Dorsolateral prefrontal cortex (tissue), 120 donors: ENCODE measurements at regions of chr10 and their contacts with region 1.

Region 1: DNA sequence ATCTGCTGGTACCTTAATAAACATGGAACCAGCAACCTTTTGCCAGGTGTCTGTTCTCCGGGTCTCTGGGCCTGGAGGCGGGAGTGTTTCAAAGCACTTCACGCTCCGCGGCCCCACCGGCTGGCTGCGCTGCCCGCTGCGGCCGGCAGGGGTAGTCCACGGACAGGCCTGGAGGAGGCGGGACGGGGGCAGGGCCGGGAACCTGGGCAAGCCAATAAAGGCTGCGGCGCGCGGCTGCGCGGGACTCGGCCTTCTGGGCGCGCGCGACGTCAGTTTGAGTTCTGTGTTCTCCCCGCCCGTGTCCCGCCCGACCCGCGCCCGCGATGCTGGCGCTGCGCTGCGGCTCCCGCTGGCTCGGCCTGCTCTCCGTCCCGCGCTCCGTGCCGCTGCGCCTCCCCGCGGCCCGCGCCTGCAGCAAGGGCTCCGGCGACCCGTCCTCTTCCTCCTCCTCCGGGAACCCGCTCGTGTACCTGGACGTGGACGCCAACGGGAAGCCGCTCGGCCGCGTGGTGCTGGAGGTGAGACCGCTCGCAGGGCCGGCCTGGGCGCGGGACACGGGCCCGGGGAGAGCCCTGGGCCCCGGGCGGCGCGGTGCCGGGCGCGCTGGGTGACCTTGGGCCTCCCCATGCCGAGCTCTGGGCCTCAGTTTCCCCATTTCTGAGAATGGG is at the start of gene PPIF:
- DNase-seq: peak; percentile 95 to 97 (median 96)
- H3K4me3 ChIP-seq: peak within 1 kb of the TSS; percentile 66 to 99 (median 88)
- H3K27ac ChIP-seq: peak within 1 kb of the TSS in 58 of 59 donors; percentile 43 to 95 (median 86)
- H3K27me3 ChIP-seq: no peaks in the 10 kb centered on the region
- CTCF ChIP-seq: peak; percentile 85 to 100 (median 98)
- total RNA-seq, gene PPIF: 36.9 to 90.0 (median 52.6) TPM

Region 2: DNA sequence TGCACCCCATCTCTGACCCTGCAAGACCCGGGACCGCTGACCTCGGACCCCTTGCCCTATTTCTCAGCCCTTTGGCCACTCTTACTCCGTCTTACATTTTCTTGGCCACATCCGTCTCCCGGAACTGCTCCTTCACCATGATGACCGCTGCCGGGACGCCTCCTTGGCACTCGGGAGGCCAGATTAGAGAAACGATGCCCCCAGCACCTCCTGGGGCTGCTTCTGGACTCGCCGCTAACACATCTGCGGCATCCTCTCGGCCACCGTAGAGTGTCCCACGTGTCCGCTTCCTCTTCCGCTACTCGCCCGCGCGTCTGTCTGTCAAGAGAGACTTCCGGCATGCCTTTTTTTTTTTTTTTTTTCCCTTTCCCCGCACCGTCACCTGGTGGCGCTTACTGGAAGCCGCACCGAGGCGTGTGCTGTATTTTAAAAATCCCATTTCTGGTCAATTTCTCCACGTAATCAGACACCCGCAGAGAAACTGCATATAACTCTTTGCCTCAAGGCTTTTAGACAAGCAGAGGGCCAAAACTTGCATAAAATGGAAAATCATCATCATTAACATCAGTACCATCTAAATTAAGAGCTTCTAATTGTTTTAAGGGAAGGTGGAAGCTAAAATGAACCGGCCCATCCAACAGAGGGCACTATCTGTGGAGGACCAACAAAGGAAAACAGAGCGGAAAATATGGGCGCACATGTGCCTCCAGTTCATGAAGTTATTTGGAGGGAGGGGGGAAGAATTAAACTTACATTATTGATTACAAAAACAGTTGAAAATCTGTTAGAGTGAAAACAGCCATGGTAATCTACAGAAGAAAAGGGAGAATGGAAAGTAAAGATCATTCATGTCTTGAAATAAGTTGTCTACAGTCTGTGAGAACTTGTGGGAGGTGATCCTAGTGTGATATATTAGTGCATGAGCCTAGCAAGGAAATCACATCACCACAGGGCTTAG is 1317.8 kb before region 1 on chr10 and contains the start of gene POLR3A:
- intact Hi-C with region 1: loop called in 1 of 2 experiments (anchors 10 kb)
- DNase-seq: peak; percentile 85 to 93 (median 90)
- H3K4me3 ChIP-seq: peak within 1 kb of the TSS; percentile 61 to 100 (median 94)
- H3K27ac ChIP-seq: peak within 1 kb of the TSS; percentile 74 to 98 (median 91)
- H3K27me3 ChIP-seq: no peaks in the 10 kb centered on the region
- CTCF ChIP-seq: peak; percentile 45 to 91 (median 77)
- total RNA-seq, gene POLR3A: 23.2 to 48.6 (median 36.6) TPM

Region 3: GRCh38 chr10:79221110-79222051 is 126.0 kb before region 1 on chr10:
- intact Hi-C with region 1: loop called in 1 of 2 experiments (anchors 5 kb)
- DNase-seq: peak; percentile 57 to 84 (median 76)
- H3K4me3 ChIP-seq: peak overlapping the region in 24 of 59 donors; percentile 3 to 44 (median 22)
- H3K27ac ChIP-seq: peak overlapping the region; percentile 1 to 91 (median 83)
- H3K27me3 ChIP-seq: no peaks in the 10 kb centered on the region
- CTCF ChIP-seq: peak in 32 of 56 donors; percentile 7 to 51 (median 32)

Region 4: DNA sequence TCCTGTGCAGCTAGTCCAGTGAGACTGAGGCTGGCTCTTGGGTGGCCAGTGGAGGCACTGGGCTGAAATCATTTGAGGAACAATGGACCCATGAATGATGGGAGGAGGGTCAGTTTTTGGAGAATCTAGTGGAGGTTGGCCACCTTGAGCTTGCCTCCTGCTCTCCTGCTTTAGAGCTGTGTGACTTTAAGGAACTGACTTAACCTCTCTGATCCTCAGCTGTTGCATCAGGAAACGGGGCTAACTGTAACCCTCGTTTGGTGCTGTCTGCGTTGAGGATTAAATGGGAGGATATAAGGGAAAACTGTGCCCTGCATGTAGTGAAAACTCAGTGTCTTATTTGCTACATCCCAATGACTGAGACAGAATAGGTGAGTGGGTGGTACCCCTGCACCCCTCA is 115.5 kb before region 1 on chr10:
- intact Hi-C with region 1: no loop called
- DNase-seq: no peak
- H3K4me3 ChIP-seq: no peak overlapping the region
- H3K27ac ChIP-seq: no peak overlapping the region
- H3K27me3 ChIP-seq: no peaks in the 10 kb centered on the region
- CTCF ChIP-seq: no peak

Region 5: GRCh38 chr10:79242620-79243152 is 104.7 kb before region 1 on chr10:
- intact Hi-C with region 1: loop called in 1 of 2 experiments (anchors 2 kb)
- DNase-seq: peak in 7 of 10 donors; percentile 42 to 86 (median 71)
- H3K4me3 ChIP-seq: peak overlapping the region; percentile 48 to 80 (median 64)
- H3K27ac ChIP-seq: peak overlapping the region in 57 of 59 donors; percentile 48 to 97 (median 90)
- H3K27me3 ChIP-seq: no peaks in the 10 kb centered on the region
- CTCF ChIP-seq: peak in 1 of 56 donors; percentile 32

Region 6: GRCh38 chr10:79274279-79275104 is 72.9 kb before region 1 on chr10:
- intact Hi-C with region 1: loop called in 1 of 2 experiments (anchors 2 kb)
- DNase-seq: peak; percentile 71 to 97 (median 95)
- H3K4me3 ChIP-seq: peak overlapping the region in 31 of 59 donors; percentile 3 to 44 (median 24)
- H3K27ac ChIP-seq: peak overlapping the region; percentile 78 to 98 (median 92)
- H3K27me3 ChIP-seq: no peaks in the 10 kb centered on the region
- CTCF ChIP-seq: peak in 43 of 56 donors; percentile 9 to 61 (median 36)

Region 7: DNA sequence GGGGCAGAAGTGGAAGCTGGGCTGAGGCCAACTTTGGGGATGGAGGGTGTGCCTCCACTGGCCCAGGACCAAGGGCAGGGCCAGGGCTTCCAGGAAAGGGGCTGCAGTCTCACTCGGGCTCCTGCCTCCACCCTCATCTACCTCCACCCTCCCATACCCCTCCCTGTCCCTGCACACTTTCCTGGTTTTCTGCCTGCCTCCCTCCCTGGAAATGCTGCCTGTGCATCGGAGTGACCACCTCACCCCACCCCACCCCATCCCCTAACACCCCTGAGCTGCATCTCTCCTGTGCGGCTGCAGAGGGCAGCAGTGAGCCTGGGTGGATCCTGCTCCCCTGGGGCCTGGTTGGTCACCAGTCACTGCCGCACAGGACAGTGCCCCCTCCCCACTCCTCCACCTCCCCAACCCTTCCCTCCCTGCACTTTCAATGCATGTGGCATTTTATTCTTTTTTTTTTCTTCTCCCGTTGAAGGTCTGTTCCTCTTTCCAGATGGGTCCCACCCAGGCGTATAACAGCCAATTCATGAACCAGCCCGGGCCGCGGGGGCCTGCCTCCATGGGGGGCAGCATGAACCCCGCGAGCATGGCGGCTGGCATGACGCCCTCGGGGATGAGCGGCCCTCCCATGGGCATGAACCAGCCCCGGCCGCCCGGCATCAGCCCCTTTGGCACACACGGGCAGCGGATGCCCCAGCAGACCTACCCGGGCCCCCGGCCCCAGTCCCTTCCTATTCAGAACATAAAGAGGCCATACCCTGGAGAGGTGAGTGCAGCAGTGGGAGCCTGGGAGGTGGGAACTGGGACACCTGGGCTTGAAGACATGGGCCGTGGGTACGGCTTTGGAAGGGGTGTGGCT is 54.2 kb before region 1 on chr10:
- intact Hi-C with region 1: loop called (anchors 5 kb)
- DNase-seq: no peak
- H3K4me3 ChIP-seq: no peak overlapping the region
- H3K27ac ChIP-seq: peak overlapping the region in 51 of 59 donors; percentile 7 to 82 (median 60)
- H3K27me3 ChIP-seq: no peaks in the 10 kb centered on the region
- CTCF ChIP-seq: peak in 50 of 56 donors; percentile 19 to 71 (median 50)

Region 8: DNA sequence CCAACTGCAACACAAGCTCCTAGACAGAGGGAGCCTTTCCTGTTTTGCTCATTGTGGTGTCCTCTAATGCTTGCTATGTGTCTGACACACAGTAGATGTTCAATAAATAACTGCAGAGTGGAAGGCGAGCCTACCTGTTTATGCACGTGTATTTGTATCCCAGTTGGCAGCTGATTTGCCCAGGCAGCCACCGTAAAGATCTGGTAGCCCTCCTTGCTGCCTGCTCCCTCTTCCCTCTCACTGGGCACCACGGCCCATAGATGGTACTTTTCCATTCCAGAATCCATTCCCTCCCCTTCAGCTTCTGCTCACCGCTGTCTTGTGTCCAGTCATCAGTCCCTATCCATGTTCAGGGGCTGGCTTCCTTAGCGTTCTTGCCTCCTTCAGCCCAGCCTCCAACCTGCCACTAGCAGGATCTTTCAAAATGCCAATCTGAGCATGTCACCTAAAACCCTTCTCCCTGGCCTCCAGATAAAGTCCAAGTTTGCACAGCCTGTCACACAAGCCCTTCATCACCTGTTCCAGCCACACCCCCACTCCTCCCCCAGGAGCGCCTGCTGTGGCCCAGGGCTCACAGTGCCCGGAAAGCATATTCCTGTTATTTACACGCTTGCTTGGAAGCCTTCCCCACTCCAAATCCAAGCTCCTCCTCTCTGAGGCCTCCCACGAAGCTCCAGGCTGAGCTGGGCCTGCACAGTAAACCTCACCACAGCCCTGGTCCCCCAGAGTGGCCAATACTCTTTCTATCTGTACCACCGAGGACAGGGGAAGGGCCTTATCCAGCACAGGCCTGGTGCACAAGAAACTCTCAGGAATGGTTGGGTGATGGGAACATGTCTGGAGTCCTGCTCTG is 77.1 kb after region 1 on chr10:
- intact Hi-C with region 1: no loop called
- DNase-seq: no peak
- H3K4me3 ChIP-seq: peak overlapping the region in 3 of 59 donors; percentile 6 to 20 (median 16)
- H3K27ac ChIP-seq: peak overlapping the region in 45 of 59 donors; percentile 10 to 83 (median 70)
- H3K27me3 ChIP-seq: no peaks in the 10 kb centered on the region
- CTCF ChIP-seq: no peak